ENCODE measurements at regions of chr10 and their contacts with region 1.

Region 1: GRCh38 chr10:1048732-1049424 is at the start of gene IDI1:
- DNase-seq: peak; percentile 98
- ATAC-seq: peak; percentile 88
- H3K4me3 Mint-ChIP-seq: peak within 1 kb of the TSS; percentile 95
- H3K27ac Mint-ChIP-seq: peak within 1 kb of the TSS; percentile 97
- H3K4me1 Mint-ChIP-seq: peaks cover 53% of the 10 kb centered on the region
- H3K27me3 Mint-ChIP-seq: no peaks in the 10 kb centered on the region
- total RNA-seq, gene IDI1: 53.8 to 57.6 TPM

Region 2: DNA sequence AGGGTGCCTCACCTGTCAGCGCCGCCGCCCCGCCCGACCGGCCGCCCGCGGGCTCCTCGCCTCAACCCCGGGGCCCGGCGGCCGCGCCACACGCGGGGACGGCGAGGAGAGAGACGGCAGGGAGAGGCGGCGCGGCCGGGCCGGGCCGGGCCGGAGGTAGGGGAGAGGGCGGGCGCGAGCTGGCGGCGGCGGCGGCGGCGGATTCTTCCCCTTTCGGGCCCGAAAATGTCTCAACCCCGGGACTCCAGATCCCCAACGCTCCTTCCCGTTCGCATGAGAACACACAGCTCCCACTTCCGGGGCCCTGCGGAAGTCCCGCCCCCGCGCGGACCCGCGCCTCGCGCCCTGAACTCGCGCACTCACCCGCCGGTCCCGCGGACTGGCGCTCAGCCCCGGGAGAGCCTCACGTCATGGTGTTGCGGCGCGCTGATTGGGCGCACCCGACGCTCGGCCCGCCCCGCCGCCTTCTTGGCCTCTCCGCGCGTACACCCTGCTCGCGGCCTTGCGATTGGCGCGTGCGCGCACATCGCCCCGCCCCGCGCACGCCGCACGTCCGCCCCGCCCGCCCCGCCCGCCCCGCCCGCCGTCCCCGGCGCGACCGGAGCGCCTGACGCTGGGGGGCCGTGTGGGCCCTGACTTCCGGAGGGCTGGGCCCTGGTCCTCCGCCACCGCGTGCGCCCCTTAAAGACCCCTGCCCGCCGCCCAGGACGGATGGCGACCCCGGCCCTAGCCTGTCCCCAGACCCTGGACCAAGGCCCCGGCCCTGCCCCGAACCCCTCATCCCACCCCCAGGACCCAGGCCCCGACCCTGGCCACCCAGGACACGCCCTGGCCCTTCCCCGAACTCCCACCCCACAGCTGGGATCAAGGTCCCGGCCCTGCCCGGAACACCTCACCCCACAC is 117.2 kb before region 1 on chr10 and contains the start of gene LARP4B:
- POLR2A ChIA-PET with region 1: interaction called, 17 read pairs
- DNase-seq: peak; percentile 98
- ATAC-seq: peak; percentile 99
- H3K4me3 Mint-ChIP-seq: peak within 1 kb of the TSS; percentile 98
- H3K27ac Mint-ChIP-seq: peak within 1 kb of the TSS; percentile 98
- H3K4me1 Mint-ChIP-seq: peaks cover 24% of the 10 kb centered on the region
- H3K27me3 Mint-ChIP-seq: no peaks in the 10 kb centered on the region
- total RNA-seq, gene LARP4B: 98.1 to 99.8 TPM

Region 3: GRCh38 chr10:1022413-1022812 is 26.5 kb before region 1 on chr10:
- POLR2A ChIA-PET with region 1: no interaction called
- DNase-seq: no peak
- ATAC-seq: no peak
- H3K4me3 Mint-ChIP-seq: no peak overlapping the region
- H3K27ac Mint-ChIP-seq: no peak overlapping the region
- H3K4me1 Mint-ChIP-seq: no peaks in the 10 kb centered on the region
- H3K27me3 Mint-ChIP-seq: no peaks in the 10 kb centered on the region

Region 4: GRCh38 chr10:1132584-1132983 is 83.7 kb after region 1 on chr10:
- POLR2A ChIA-PET with region 1: no interaction called
- DNase-seq: no peak
- ATAC-seq: no peak
- H3K4me3 Mint-ChIP-seq: no peak overlapping the region
- H3K27ac Mint-ChIP-seq: no peak overlapping the region
- H3K4me1 Mint-ChIP-seq: peaks cover 20% of the 10 kb centered on the region
- H3K27me3 Mint-ChIP-seq: no peaks in the 10 kb centered on the region